Activated CD4-positive, alpha-beta T cell treated with anti-CD3 and anti-CD28 coated beads for 36 hours (primary cell): ENCODE measurements at regions of chr6 and their contacts with region 1.

Region 1: GRCh38 chr6:83292900-83293843 is 100.0 kb downstream of the RWDD2A start:
- DNase-seq: no peak
- ATAC-seq: peak; percentile 90
- H3K4me3 Mint-ChIP-seq: no peak overlapping the region
- H3K27ac Mint-ChIP-seq: no peak overlapping the region
- H3K4me1 Mint-ChIP-seq: peaks cover 11% of the 10 kb centered on the region
- H3K27me3 Mint-ChIP-seq: peaks cover 46% of the 10 kb centered on the region

Region 2: GRCh38 chr6:83270971-83271719 is 22.0 kb before region 1 on chr6:
- CTCF ChIA-PET with region 1: no interaction called
- POLR2A ChIA-PET with region 1: no interaction called
- intact Hi-C with region 1: loop called in 1 of 2 experiments (anchors 1 kb)
- DNase-seq: no peak
- ATAC-seq: peak; percentile 44
- H3K4me3 Mint-ChIP-seq: no peak overlapping the region
- H3K27ac Mint-ChIP-seq: no peak overlapping the region
- H3K4me1 Mint-ChIP-seq: peaks cover 7% of the 10 kb centered on the region
- H3K27me3 Mint-ChIP-seq: peaks cover 13% of the 10 kb centered on the region